Ascending aorta (tissue), 2 donors: ENCODE measurements at regions of chr11 and their contacts with region 1.

Region 1: DNA sequence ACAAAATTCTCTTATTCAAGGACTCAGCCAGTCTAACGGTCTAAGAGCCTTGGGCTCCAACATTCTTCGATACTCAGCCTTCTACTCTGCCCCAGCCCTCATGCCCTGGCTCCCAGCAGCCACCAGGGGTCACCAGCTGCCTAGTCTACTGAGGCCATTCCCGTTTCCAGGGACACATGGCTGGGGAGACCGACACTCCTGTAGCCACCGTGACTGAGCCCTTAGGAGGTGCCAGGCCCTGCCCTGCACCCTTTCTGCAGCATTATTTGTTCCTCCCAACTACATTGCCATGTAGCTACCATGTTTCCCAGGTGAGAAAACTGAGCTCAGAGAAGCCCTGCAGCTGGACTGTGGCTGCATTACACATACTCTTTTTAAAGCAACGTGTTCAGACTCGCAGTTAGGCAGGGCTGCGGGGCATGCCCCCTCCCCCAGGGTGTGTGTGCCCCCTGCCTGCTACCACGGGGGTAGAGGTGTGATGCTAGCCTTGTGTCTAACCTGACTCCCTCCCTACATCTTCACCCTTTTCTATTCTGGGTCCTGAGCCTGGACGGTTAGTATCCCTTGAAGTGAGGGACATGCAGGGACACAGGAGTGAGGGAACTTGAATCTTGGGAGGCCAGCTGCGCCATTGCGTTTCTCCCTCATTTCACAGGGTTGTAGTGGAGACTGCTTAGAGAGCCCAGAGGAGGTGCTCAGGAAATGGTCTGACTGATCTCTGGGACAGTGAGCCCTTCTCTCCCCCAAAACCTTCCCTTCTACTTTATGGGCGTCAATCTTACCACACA is 17.5 kb downstream of the ATG16L2 start:
- DNase-seq: peak in 1 of 2 donors; percentile 94
- H3K4me3 ChIP-seq: no peak overlapping the region
- H3K27ac ChIP-seq: peak overlapping the region; percentile 97 to 99
- H3K4me1 ChIP-seq: peaks cover 23 to 50% of the 10 kb centered on the region in 2 donors
- H3K27me3 ChIP-seq: no peaks in the 10 kb centered on the region
- CTCF ChIP-seq: peak; percentile 93 to 98 (median 93)

Region 2: DNA sequence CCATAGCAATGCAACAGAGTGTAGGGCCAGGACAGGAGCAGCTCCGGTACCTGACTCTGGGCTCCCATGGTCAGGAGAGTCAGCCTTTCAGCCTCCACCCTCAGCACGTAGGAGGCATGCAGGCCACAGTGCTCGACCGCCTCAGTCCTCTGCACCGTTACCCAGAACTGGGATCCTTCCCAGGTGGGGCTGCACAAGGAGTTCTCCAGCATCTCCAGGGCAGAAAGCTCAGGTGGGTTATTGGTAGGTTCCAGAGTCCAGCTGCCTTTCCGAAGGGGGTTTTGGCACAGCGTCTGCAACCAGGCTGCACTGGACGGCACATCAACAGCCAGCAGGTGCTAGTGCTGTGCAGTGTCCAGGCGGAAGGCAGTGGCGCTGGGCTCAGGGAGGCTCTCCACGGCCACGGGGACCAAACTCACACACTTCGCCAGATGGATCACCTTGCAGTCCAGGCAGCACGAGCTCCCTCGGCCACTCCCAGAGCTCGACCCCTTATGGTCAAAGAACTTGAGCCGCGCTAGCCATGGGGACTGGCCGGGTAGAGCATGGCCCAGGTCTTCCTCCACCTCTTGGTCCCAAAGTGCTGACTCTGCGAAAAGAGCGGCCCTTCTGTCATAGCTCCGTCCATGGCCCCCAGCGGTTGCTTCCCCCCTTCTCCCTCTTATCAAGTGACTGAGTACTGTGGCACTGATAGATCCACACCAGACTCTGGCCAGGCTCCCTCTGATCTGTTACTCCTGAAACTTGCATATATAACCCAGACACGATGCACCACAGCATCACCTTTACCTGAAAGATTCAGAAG is 580.8 kb before region 1 on chr11:
- intact Hi-C with region 1: no loop called
- DNase-seq: no peak
- H3K4me3 ChIP-seq: no peak overlapping the region
- H3K27ac ChIP-seq: no peak overlapping the region
- H3K4me1 ChIP-seq: no peaks in the 10 kb centered on the region
- H3K27me3 ChIP-seq: no peaks in the 10 kb centered on the region
- CTCF ChIP-seq: no peak

Region 3: DNA sequence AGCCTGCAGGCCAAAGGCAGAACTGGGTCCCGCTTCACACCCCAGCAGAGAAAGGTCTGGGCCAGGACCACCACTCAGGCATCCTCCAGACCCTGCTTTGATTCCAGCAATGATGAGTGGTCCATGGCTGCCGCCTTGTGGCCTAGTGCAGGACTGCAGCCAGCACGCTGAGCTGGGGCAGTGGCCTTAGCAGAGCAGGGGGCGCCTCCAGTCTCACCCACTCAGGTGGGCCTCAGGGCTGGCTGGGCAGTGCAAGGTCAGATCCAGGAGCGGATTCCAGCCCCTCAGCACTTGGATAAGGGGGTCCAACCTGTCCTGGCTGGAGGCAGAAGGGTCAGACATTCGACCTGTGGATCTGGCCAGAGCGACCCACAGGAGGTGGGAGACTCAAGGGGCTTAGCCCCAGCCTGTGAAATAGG is 147.9 kb before region 1 on chr11:
- intact Hi-C with region 1: no loop called
- DNase-seq: peak in 1 of 2 donors; percentile 85
- H3K4me3 ChIP-seq: no peak overlapping the region
- H3K27ac ChIP-seq: no peak overlapping the region
- H3K4me1 ChIP-seq: no peaks in the 10 kb centered on the region
- H3K27me3 ChIP-seq: no peaks in the 10 kb centered on the region
- CTCF ChIP-seq: peak; percentile 89 to 98 (median 97)

Region 4: GRCh38 chr11:72735495-72736027 is 96.1 kb before region 1 on chr11:
- intact Hi-C with region 1: no loop called
- DNase-seq: no peak
- H3K4me3 ChIP-seq: no peak overlapping the region
- H3K27ac ChIP-seq: peak overlapping the region in 1 of 2 donors; percentile 54
- H3K4me1 ChIP-seq: peaks cover 0 to 6% of the 10 kb centered on the region in 2 donors
- H3K27me3 ChIP-seq: no peaks in the 10 kb centered on the region
- CTCF ChIP-seq: no peak

Region 5: DNA sequence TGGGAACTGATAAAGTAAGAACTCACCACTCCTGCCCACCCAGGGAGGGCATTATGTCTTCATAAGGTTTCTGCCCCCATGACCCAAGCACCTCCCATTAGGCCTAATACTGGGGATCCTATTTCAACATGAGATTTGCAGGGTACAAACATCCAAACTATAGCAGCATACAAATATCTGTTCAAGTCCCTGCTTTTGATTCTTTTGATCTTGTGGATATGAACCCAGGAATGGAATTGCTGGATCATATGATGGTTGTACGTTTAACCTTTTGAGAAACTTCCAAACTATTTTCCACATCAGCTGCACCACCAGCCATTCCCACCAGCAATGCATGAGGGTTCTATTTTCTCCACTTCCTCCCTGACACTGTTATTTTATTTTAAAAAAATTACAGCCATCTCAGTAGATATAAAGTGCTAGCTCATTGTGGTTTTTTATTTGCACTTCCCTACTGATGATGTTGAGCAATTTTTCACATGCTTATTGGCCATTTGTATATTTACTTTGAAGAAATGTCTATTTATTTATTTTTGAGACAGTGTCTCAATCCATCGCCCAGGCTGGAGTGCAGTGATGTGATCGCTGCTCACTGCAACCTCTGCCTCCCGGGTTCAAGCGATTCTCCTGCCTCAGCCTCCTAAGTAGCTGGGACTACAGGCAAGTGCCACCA is 24.6 kb before region 1 on chr11:
- intact Hi-C with region 1: no loop called
- DNase-seq: no peak
- H3K4me3 ChIP-seq: no peak overlapping the region
- H3K27ac ChIP-seq: peak overlapping the region in 1 of 2 donors; percentile 42
- H3K4me1 ChIP-seq: peaks cover 0 to 6% of the 10 kb centered on the region in 2 donors
- H3K27me3 ChIP-seq: no peaks in the 10 kb centered on the region
- CTCF ChIP-seq: no peak

Region 6: DNA sequence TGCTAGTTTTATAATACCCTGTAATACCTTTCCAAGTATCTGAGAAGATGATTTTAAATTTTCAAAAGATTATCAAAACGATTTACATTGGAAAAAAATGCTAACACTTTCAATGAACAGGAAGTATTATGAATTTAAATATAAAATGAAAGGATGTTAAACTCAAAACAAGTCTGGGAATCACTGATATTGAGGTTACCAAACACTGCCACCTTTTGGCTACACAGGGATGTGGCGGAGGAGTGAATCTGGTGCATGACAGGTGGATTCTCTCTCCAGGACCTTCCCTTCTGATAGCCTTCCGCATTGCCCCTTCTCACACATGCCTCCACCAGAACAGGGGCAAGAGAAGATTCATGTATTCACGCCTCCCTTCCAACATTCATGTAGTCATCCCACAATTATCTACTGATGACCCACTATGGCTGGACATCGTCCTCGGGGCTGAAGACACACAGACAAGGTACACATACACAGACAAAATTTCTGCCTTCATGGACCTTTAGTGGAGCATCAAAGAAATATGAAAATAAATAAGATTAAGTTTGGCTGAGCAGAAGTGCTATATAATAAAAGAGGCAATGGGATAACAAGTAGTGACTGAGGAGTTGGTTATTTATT is 17.2 kb after region 1 on chr11:
- intact Hi-C with region 1: loop called (anchors 2 kb)
- DNase-seq: no peak
- H3K4me3 ChIP-seq: no peak overlapping the region
- H3K27ac ChIP-seq: peak overlapping the region in 1 of 2 donors; percentile 7
- H3K4me1 ChIP-seq: peaks cover 0 to 2% of the 10 kb centered on the region in 2 donors
- H3K27me3 ChIP-seq: no peaks in the 10 kb centered on the region
- CTCF ChIP-seq: peak; percentile 44 to 72 (median 57)

Region 7: DNA sequence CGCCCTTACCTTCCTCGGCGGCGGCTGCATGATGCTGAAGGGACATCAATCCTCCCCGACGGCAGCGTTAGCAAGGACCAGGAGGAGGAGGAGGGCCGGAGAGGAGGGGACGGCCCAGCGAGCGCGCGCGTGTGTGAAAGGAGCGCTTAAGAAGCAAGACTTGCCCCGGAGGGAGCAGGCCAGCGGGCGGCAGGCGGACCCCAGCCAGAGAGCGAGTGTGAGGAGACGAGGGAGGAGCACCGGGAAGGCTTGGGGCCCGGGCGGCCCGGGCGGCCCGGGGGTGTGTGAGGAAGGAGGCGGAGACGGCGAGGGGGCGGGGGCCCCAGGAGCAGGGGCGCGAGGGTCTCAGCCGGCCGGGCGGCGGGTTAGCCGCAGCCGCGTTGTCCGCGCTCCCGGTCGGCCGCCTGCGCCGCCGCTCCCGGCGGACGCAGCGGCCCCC is 310.2 kb after region 1 on chr11:
- intact Hi-C with region 1: loop called (anchors 1 kb)
- DNase-seq: peak; percentile 26 to 86
- H3K4me3 ChIP-seq: peak overlapping the region; percentile 98 to 99
- H3K27ac ChIP-seq: peak overlapping the region; percentile 99 to 100
- H3K4me1 ChIP-seq: peaks cover 8 to 23% of the 10 kb centered on the region in 2 donors
- H3K27me3 ChIP-seq: no peaks in the 10 kb centered on the region
- CTCF ChIP-seq: no peak